Activated CD4-positive, alpha-beta memory T cell treated with anti-CD3 and anti-CD28 coated beads, Interleukin-2, amount 10 ng/mL, durations not matched to agents 7 days and 5 days (primary cell): ENCODE measurements at regions of chr6 and their contacts with region 1.

Region 1: GRCh38 chr6:158972241-158973233 is 27.5 kb downstream of the RSPH3 start:
- DNase-seq: no peak
- H3K4me3 Mint-ChIP-seq: no peak overlapping the region
- H3K27ac Mint-ChIP-seq: no peak overlapping the region
- H3K4me1 Mint-ChIP-seq: peaks cover 2% of the 10 kb centered on the region
- H3K27me3 Mint-ChIP-seq: peaks cover 1% of the 10 kb centered on the region

Region 2: DNA sequence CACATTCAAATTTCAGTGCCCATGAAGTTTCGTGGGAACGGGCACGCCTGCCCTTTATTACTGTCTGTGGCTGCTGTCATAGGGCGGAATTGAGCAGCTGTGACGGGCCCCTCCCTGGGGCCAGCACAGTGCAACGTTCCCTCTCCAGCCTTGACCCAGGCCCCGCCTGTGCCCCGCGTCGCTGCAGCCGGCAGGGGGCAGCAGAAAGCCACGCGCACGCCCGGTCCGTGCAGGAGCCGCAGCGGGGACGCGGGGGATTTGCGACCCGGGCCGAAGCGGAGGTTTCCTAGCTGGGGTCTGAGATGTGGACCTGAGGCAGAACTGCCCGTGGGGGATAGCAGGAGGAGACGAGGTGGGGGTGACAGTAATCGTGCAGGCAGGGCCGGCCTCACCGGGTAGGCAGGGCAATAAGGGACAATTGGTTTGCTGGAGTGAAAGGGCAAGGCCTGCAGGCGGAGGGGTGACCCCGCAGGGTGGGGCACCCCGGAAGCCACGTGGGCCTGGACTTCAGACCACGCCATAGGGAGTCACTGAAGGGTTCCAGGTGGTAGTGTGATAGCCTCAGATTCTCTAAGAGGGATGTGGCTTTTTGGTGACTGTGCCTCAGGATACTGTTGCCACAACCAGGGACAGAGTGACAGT is 268.2 kb before region 1 on chr6:
- CTCF ChIA-PET with region 1: interaction called, 12 read pairs
- POLR2A ChIA-PET with region 1: interaction called, 3 read pairs
- DNase-seq: peak; percentile 79
- H3K4me3 Mint-ChIP-seq: peak overlapping the region; percentile 59
- H3K27ac Mint-ChIP-seq: peak overlapping the region; percentile 68
- H3K4me1 Mint-ChIP-seq: peaks cover 27% of the 10 kb centered on the region
- H3K27me3 Mint-ChIP-seq: no peaks in the 10 kb centered on the region

Region 3: DNA sequence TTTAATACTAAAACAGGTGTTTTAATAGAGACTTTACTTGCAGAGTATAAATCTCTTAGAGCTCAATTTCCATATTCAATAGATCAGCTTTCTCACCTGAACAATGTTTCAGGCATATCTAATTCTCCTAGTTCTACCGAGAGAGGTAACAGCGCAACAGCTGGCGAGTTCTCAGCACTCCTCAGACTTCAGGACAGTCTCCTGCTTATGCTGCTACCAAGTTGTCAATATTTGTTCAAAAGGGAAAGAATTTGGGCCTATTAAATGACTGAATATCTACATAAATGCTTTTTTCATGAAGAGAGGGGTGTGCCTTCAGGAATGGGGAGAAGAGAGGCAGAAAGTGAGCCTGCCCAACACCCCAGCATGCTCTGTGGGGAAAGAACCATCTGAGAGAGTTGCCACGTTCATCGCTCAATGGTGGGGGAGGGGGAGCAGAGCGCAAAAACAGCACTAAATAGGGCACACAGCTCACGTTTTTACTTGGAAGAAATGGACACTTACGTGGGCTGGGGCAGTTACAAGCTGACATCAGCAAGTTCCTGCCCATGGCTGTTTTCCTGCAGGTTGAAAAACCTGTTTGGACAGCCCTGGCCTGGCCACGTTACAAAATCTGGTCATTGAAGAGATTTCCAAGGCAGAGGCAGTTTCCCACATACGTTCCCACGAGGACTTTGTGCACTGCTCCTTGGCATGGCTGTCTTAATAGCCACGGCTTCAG is 191.4 kb before region 1 on chr6:
- CTCF ChIA-PET with region 1: interaction called, 13 read pairs
- POLR2A ChIA-PET with region 1: no interaction called
- DNase-seq: no peak
- H3K4me3 Mint-ChIP-seq: no peak overlapping the region
- H3K27ac Mint-ChIP-seq: no peak overlapping the region
- H3K4me1 Mint-ChIP-seq: peaks cover 41% of the 10 kb centered on the region
- H3K27me3 Mint-ChIP-seq: no peaks in the 10 kb centered on the region

Region 4: GRCh38 chr6:158879180-158879579 is 93.4 kb before region 1 on chr6:
- CTCF ChIA-PET with region 1: no interaction called
- POLR2A ChIA-PET with region 1: no interaction called
- DNase-seq: peak; percentile 74
- H3K4me3 Mint-ChIP-seq: no peak overlapping the region
- H3K27ac Mint-ChIP-seq: peak overlapping the region; percentile 21
- H3K4me1 Mint-ChIP-seq: peaks cover 18% of the 10 kb centered on the region
- H3K27me3 Mint-ChIP-seq: peaks cover 6% of the 10 kb centered on the region

Region 5: GRCh38 chr6:159013229-159013628 is 40.7 kb after region 1 on chr6:
- CTCF ChIA-PET with region 1: no interaction called
- POLR2A ChIA-PET with region 1: no interaction called
- DNase-seq: no peak
- H3K4me3 Mint-ChIP-seq: no peak overlapping the region
- H3K27ac Mint-ChIP-seq: no peak overlapping the region
- H3K4me1 Mint-ChIP-seq: peaks cover 60% of the 10 kb centered on the region
- H3K27me3 Mint-ChIP-seq: no peaks in the 10 kb centered on the region